Transverse colon (tissue), 4 donors: ENCODE measurements at regions of chr1 and their contacts with region 1.

Region 1: DNA sequence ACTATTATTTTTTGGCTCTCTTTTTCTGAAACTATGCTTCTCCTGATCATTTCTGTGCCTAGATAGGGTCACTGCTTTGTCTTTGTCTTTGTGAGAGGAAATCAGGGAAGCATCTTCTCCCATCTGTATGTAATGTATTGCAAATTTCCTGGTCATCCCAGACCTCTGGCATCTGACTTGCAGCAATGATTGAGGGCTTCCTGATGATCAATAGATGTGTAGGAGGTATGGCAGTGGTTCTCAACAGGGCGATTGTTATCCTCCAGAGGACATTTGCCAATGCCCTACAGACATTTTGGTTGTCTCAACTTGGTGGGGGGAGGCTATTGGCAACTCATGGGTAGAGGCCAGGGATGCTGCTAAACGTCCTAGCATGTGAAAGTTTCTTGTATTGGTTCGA is 64.7 kb downstream of the RGL1 start:
- DNase-seq: no peak
- H3K4me3 ChIP-seq: no peak overlapping the region
- H3K27ac ChIP-seq: peak overlapping the region; percentile 54 to 71 (median 64)
- H3K4me1 ChIP-seq: peaks cover 0 to 39% (median 6%) of the 10 kb centered on the region in 4 donors
- H3K27me3 ChIP-seq: no peaks in the 10 kb centered on the region
- CTCF ChIP-seq: no peak
- EP300 ChIP-seq: no peak
- POLR2A ChIP-seq: no peak

Region 2: GRCh38 chr1:183804881-183805841 is 64.5 kb before region 1 on chr1 and contains the start of gene RGL1:
- in situ Hi-C with region 1: no loop called
- intact Hi-C with region 1: loop called (anchors 2 kb)
- DNase-seq: peak; percentile 60
- H3K4me3 ChIP-seq: peak within 1 kb of the TSS; percentile 39 to 63 (median 47)
- H3K27ac ChIP-seq: peak within 1 kb of the TSS; percentile 84 to 86 (median 84)
- H3K4me1 ChIP-seq: peaks cover 0 to 33% (median 3%) of the 10 kb centered on the region in 4 donors
- H3K27me3 ChIP-seq: peaks cover 11% of the 10 kb centered on the region
- CTCF ChIP-seq: no peak
- EP300 ChIP-seq: no peak
- POLR2A ChIP-seq: peak; percentile 19
- total RNA-seq, gene RGL1: 12.1 to 13.8 (median 13.0) TPM